HepG2 (cell line): ENCODE measurements at regions of chr13 and their contacts with region 1.

Region 1: GRCh38 chr13:50884265-50884664 is 25.3 kb upstream of the RNASEH2B start:
- DNase-seq: no peak
- ATAC-seq: no peak
- H3K4me3 ChIP-seq: no peak overlapping the region
- H3K27ac ChIP-seq: no peak overlapping the region
- H3K4me1 ChIP-seq: no peaks in the 10 kb centered on the region
- H3K27me3 ChIP-seq: no peaks in the 10 kb centered on the region
- CTCF ChIP-seq: no peak
- EP300 ChIP-seq: no peak
- POLR2A ChIP-seq: no peak
- RAD21 ChIP-seq: no peak

Region 2: DNA sequence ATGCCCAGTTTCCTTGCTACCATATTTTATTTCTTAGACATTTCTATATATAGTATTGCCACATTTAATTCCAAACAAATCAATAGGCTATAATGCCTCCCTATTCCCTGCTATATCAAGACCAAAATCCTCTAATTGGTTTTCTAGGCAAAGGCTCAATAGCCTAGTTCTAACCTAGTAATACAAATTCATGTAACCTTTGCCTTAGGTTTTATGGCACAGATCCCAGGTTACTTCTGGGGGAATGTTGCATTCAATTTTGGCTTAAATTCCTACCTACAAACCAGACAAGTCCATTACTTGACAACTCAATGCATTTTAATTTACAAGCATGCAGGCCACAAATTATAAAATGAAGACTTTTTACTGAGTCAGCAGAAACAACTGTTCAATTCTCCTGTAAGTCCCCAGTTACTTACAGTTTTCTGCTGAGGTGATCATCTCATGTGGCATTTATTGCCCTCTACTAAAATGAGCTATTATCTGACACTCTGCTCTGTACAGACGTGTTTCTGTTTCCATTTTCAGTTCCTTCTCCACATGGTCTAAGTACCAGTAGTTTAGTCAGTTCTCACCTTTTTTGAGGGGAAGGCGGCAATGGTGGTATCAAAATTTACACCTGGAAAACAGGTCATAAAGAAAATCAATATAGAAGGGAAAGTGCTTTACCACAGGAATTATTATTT is 857.3 kb before region 1 on chr13:
- CTCF ChIA-PET with region 1: no interaction called
- POLR2A ChIA-PET with region 1: no interaction called
- in situ Hi-C with region 1: no loop called
- intact Hi-C with region 1: no loop called
- DNase-seq: no peak
- ATAC-seq: no peak
- H3K4me3 ChIP-seq: no peak overlapping the region
- H3K27ac ChIP-seq: no peak overlapping the region
- H3K4me1 ChIP-seq: 0 out of 2 replicates have a peak, but pooled peaks cover 9% of the 10 kb centered on the region
- H3K27me3 ChIP-seq: no peaks in the 10 kb centered on the region
- CTCF ChIP-seq: no peak
- EP300 ChIP-seq: no peak
- POLR2A ChIP-seq: no peak
- RAD21 ChIP-seq: no peak

Region 3: DNA sequence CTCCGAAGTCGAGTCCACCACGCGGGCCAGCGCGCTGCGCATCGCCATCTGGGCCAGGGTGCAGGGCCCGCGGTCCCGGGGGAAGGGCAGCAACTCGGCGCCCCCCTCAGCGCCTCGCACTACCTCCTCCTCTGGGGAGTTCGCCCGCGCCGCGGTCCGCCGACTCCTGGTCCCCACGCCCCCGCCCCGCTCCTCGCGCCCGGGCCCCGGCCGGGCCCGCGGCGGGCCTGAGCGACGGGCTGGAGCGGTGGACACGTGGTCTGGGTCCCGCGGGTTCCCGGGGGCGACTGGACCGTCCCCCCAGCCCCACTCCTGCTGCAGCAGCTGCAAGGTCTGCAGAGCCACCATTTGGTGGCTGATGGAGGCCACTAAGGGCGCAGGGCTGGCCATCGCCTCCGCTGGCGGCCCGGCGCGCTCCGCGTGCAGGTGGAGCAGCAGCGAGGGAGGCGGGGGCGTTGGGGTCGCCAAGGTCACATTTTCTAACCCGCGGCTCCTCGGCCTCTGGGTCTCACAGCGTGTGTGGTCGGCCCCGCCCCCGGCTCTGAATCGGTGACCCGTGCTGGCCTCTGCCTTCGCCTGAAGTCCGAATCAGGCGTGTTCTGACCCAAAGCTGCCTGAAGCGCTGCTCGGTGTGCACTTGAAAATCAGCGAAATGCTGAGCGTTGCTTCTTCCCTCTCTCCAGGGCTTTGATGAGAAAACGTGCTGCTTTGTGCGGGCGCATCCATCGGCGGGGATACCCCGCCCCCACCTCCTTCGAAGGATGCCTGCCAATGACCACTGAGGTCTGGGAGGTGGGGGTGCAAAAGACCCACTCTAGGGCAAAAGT is 40.8 kb before region 1 on chr13 and contains the start of gene DLEU7:
- CTCF ChIA-PET with region 1: no interaction called
- POLR2A ChIA-PET with region 1: no interaction called
- in situ Hi-C with region 1: no loop called
- intact Hi-C with region 1: no loop called
- DNase-seq: no peak
- ATAC-seq: no peak
- H3K4me3 ChIP-seq: no peak within 1 kb of the TSS
- H3K27ac ChIP-seq: no peak within 1 kb of the TSS
- H3K4me1 ChIP-seq: no peaks in the 10 kb centered on the region
- H3K27me3 ChIP-seq: no peaks in the 10 kb centered on the region
- CTCF ChIP-seq: no peak
- EP300 ChIP-seq: no peak
- POLR2A ChIP-seq: no peak
- RAD21 ChIP-seq: no peak
- total RNA-seq, gene DLEU7: not detected in 2 replicates

Region 4: DNA sequence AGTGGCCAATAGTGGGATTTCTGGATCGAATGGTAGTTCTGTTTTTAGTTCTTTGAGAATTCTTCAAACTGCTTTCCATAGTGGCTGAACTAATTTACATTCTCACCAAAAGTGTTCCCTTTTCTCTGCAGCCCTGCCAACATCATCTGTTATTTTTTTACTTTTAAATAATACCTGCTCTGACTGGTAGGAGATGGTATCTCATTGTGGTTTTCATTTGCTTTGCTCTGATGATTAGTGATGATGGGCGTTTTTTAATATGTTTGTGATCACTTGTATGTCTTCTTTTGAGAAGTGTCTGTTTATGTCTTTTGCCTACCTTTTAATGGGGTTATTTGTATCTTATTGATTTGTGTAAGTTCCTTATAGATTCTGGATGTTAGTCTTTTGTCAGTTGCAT is 73.4 kb after region 1 on chr13:
- CTCF ChIA-PET with region 1: no interaction called
- POLR2A ChIA-PET with region 1: no interaction called
- in situ Hi-C with region 1: no loop called
- intact Hi-C with region 1: loop called (anchors 2 kb)
- DNase-seq: no peak
- ATAC-seq: no peak
- H3K4me3 ChIP-seq: no peak overlapping the region
- H3K27ac ChIP-seq: no peak overlapping the region
- H3K4me1 ChIP-seq: no peaks in the 10 kb centered on the region
- H3K27me3 ChIP-seq: no peaks in the 10 kb centered on the region
- CTCF ChIP-seq: no peak
- EP300 ChIP-seq: no peak
- POLR2A ChIP-seq: no peak
- RAD21 ChIP-seq: no peak